ENCODE measurements at regions of chr3 and their contacts with region 1.

Region 1: GRCh38 chr3:184513276-184514170 is 48.1 kb upstream of the EPHB3 start:
- DNase-seq: peak; percentile 83
- H3K4me3 Mint-ChIP-seq: peak overlapping the region; percentile 39
- H3K27ac Mint-ChIP-seq: no peak overlapping the region
- H3K4me1 Mint-ChIP-seq: peaks cover 11% of the 10 kb centered on the region
- H3K27me3 Mint-ChIP-seq: peaks cover 67% of the 10 kb centered on the region

Region 2: DNA sequence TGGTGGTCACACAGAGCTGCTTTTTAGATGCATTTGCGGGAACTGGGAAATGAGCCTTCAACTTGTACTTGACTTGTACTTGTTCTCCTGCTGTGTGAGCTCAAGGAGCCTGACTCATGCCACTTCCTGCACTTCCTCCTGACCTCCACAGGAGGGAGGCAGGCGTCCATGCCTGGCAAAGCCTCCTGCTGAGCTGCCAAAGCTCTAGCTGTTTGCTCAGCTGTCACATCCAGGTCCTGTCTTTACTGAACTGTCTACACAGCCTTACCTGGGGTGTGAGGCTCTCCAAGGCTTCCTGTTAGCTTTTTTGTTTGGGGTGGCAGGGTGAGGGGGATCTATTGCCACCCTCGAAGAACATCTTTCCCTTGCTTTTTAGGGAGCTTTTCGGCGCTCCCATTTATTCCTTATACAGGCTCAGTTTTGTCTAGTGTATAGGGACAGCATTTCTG is 141.9 kb before region 1 on chr3:
- CTCF ChIA-PET with region 1: interaction called, 68 read pairs
- POLR2A ChIA-PET with region 1: interaction called, 3 read pairs
- DNase-seq: peak; percentile 73
- H3K4me3 Mint-ChIP-seq: no peak overlapping the region
- H3K27ac Mint-ChIP-seq: no peak overlapping the region
- H3K4me1 Mint-ChIP-seq: peaks cover 6% of the 10 kb centered on the region
- H3K27me3 Mint-ChIP-seq: peaks cover 18% of the 10 kb centered on the region

Region 3: DNA sequence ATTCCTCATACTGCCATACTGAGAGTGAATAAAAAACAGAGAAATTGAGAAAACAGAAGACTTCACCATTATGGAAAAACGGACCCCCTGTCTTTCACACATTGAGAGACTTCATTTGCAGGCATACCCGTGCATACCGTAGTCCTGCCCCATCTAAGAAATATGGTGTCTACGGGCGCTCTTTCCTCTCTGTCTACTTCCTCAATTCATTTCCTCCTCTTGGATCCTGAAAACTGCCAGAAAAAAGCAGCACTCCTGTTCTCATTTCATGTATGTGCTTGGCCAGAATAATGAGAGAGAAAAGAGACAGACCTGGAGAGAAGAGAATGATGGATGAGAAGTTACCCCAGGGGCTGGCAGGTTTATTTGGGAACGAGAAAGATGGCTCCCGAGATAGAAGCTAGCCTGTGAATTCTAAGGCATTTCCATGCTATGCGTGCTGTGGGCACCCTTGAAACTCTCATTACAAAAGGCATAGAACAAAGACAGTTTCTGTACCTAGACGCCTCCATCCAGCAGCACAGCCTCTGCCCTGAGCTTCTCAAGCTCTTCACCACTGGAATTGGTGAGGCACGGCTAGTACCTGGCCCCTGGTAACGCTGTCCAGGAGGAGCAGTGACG is 14.4 kb before region 1 on chr3:
- CTCF ChIA-PET with region 1: interaction called, 15 read pairs
- POLR2A ChIA-PET with region 1: no interaction called
- DNase-seq: no peak
- H3K4me3 Mint-ChIP-seq: no peak overlapping the region
- H3K27ac Mint-ChIP-seq: no peak overlapping the region
- H3K4me1 Mint-ChIP-seq: no peaks in the 10 kb centered on the region
- H3K27me3 Mint-ChIP-seq: peaks cover 39% of the 10 kb centered on the region

Region 4: GRCh38 chr3:184537885-184538599 is 24.5 kb after region 1 on chr3:
- CTCF ChIA-PET with region 1: interaction called, 30 read pairs
- POLR2A ChIA-PET with region 1: interaction called, 3 read pairs
- DNase-seq: no peak
- H3K4me3 Mint-ChIP-seq: no peak overlapping the region
- H3K27ac Mint-ChIP-seq: no peak overlapping the region
- H3K4me1 Mint-ChIP-seq: peaks cover 2% of the 10 kb centered on the region
- H3K27me3 Mint-ChIP-seq: peaks cover 48% of the 10 kb centered on the region

Measured in activated CD4-positive, alpha-beta memory T cell treated with anti-CD3 and anti-CD28 coated beads, Interleukin-2, amount 10 ng/mL, durations not matched to agents 7 days and 5 days (primary cell).